CD4-positive, alpha-beta T cell (primary cell): ENCODE measurements at regions of chr12 and their contacts with region 1.

Region 1: DNA sequence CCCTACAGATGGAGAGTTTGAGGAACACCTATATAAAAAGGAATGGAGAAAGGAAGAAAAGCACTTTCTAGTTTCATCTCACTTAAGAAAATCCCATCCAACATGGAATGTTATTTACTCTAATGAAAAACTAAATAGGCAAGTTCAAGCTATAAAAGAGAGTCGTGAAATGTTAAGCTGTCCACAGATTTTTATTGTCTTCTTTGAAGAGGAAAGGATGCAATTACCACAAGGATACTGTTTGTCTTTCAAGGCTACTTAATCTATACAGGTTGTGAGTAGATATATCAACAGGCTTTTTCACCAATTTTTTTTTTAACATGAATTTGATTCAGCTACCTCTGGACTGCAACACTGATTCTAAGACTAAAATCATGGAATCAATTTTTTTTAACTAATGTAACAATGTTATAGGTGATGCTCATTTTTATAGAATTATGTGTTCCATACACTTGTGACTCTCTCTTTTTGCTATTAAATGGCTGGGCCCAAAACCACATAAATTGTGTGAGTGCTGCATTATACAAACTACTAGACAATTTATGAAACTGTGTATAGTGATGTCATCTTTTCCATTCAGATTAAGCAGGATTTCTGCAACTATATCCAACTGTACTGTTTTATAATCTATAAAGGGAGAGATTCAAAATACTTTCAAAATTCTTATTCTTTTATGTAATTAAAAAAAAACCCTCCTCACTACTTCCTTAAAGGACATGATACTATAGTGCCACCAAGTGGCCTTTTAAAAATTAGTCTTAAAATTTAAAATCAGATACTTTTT is 26.8 kb upstream of the BMAL2 start:
- DNase-seq: peak in 3 of 14 experiments; percentile 52 to 59 (median 59)
- ATAC-seq: no peak
- H3K4me3 ChIP-seq: no peak overlapping the region
- H3K4me3 Mint-ChIP-seq: no peak overlapping the region
- H3K27ac ChIP-seq: no peak overlapping the region
- H3K27ac Mint-ChIP-seq: peak overlapping the region; percentile 67
- H3K4me1 ChIP-seq: no peaks in the 10 kb centered on the region
- H3K4me1 Mint-ChIP-seq: peaks cover 4% of the 10 kb centered on the region
- H3K27me3 ChIP-seq: no peaks in the 10 kb centered on the region
- H3K27me3 Mint-ChIP-seq: no peaks in the 10 kb centered on the region
- CTCF ChIP-seq: peak; percentile 71

Region 2: GRCh38 chr12:26097046-26097878 is 1208.6 kb before region 1 on chr12:
- CTCF ChIA-PET with region 1: interaction called, 4 read pairs
- POLR2A ChIA-PET with region 1: no interaction called
- intact Hi-C with region 1: loop called in 1 of 2 experiments (anchors 10 kb)
- DNase-seq: peak; percentile 22 to 78 (median 40)
- ATAC-seq: peak; percentile 80
- H3K4me3 ChIP-seq: no peak overlapping the region
- H3K4me3 Mint-ChIP-seq: no peak overlapping the region
- H3K27ac ChIP-seq: no peak overlapping the region
- H3K27ac Mint-ChIP-seq: no peak overlapping the region
- H3K4me1 ChIP-seq: no peaks in the 10 kb centered on the region
- H3K4me1 Mint-ChIP-seq: no peaks in the 10 kb centered on the region
- H3K27me3 ChIP-seq: no peaks in the 10 kb centered on the region
- H3K27me3 Mint-ChIP-seq: peaks cover 17% of the 10 kb centered on the region
- CTCF ChIP-seq: peak; percentile 98

Region 3: GRCh38 chr12:26853303-26854030 is 452.4 kb before region 1 on chr12:
- CTCF ChIA-PET with region 1: interaction called, 4 read pairs
- POLR2A ChIA-PET with region 1: no interaction called
- intact Hi-C with region 1: loop called (anchors 2 kb)
- DNase-seq: peak; percentile 56 to 84 (median 63)
- ATAC-seq: peak; percentile 99
- H3K4me3 ChIP-seq: no peak overlapping the region
- H3K4me3 Mint-ChIP-seq: no peak overlapping the region
- H3K27ac ChIP-seq: no peak overlapping the region
- H3K27ac Mint-ChIP-seq: no peak overlapping the region
- H3K4me1 ChIP-seq: no peaks in the 10 kb centered on the region
- H3K4me1 Mint-ChIP-seq: no peaks in the 10 kb centered on the region
- H3K27me3 ChIP-seq: no peaks in the 10 kb centered on the region
- H3K27me3 Mint-ChIP-seq: peaks cover 4% of the 10 kb centered on the region
- CTCF ChIP-seq: peak; percentile 80

Region 4: GRCh38 chr12:26937875-26938700 is 367.8 kb before region 1 on chr12 and contains the starts of genes FGFR1OP2 and INTS13:
- CTCF ChIA-PET with region 1: no interaction called
- POLR2A ChIA-PET with region 1: no interaction called
- intact Hi-C with region 1: loop called in 1 of 2 experiments (anchors 5 kb)
- DNase-seq: peak; percentile 89 to 98 (median 94)
- ATAC-seq: peak; percentile 91
- H3K4me3 ChIP-seq: peak within 1 kb of the TSS; percentile 71
- H3K4me3 Mint-ChIP-seq: peak within 1 kb of the TSS; percentile 90
- H3K27ac ChIP-seq: peak within 1 kb of the TSS; percentile 94 to 95
- H3K27ac Mint-ChIP-seq: peak within 1 kb of the TSS; percentile 86
- H3K4me1 ChIP-seq: peaks cover 22% of the 10 kb centered on the region
- H3K4me1 Mint-ChIP-seq: peaks cover 80% of the 10 kb centered on the region
- H3K27me3 ChIP-seq: no peaks in the 10 kb centered on the region
- H3K27me3 Mint-ChIP-seq: no peaks in the 10 kb centered on the region
- CTCF ChIP-seq: no peak
- total RNA-seq, gene FGFR1OP2: 44.8 to 46.8 TPM
- total RNA-seq, gene INTS13: 8.5 to 12.1 TPM

Region 5: GRCh38 chr12:27024291-27024690 is 281.6 kb before region 1 on chr12:
- CTCF ChIA-PET with region 1: interaction called, 5 read pairs
- POLR2A ChIA-PET with region 1: interaction called, 7 read pairs
- intact Hi-C with region 1: loop called in 1 of 2 experiments (anchors 2 kb)
- DNase-seq: no peak
- ATAC-seq: no peak
- H3K4me3 ChIP-seq: no peak overlapping the region
- H3K4me3 Mint-ChIP-seq: peak overlapping the region; percentile 91
- H3K27ac ChIP-seq: no peak overlapping the region
- H3K27ac Mint-ChIP-seq: peak overlapping the region; percentile 92
- H3K4me1 ChIP-seq: peaks cover 19% of the 10 kb centered on the region
- H3K4me1 Mint-ChIP-seq: peaks cover 43% of the 10 kb centered on the region
- H3K27me3 ChIP-seq: no peaks in the 10 kb centered on the region
- H3K27me3 Mint-ChIP-seq: no peaks in the 10 kb centered on the region
- CTCF ChIP-seq: no peak

Region 6: GRCh38 chr12:29148911-29149690 is 1843.2 kb after region 1 on chr12 and contains the start of gene FAR2:
- CTCF ChIA-PET with region 1: no interaction called
- POLR2A ChIA-PET with region 1: no interaction called
- intact Hi-C with region 1: loop called in 1 of 2 experiments (anchors 10 kb)
- DNase-seq: peak in 12 of 14 experiments; percentile 24 to 69 (median 30)
- ATAC-seq: peak; percentile 82
- H3K4me3 ChIP-seq: peak within 1 kb of the TSS; percentile 87
- H3K4me3 Mint-ChIP-seq: peak within 1 kb of the TSS; percentile 92
- H3K27ac ChIP-seq: no peak within 1 kb of the TSS
- H3K27ac Mint-ChIP-seq: peak within 1 kb of the TSS; percentile 66
- H3K4me1 ChIP-seq: peaks cover 15% of the 10 kb centered on the region
- H3K4me1 Mint-ChIP-seq: peaks cover 32% of the 10 kb centered on the region
- H3K27me3 ChIP-seq: no peaks in the 10 kb centered on the region
- H3K27me3 Mint-ChIP-seq: peaks cover 11% of the 10 kb centered on the region
- CTCF ChIP-seq: no peak
- total RNA-seq, gene FAR2: 0.53 to 1.6 TPM